Mucosa of descending colon (tissue), 3 donors: ENCODE measurements at regions of chr19 and their contacts with region 1.

Region 1: GRCh38 chr19:13262450-13262849 is 112.2 kb downstream of the IER2 start:
- DNase-seq: peak in 1 of 3 donors; percentile 19
- ATAC-seq: peak; percentile 77
- H3K4me3 ChIP-seq: no peak overlapping the region
- H3K4me1 ChIP-seq: no peaks in the 10 kb centered on the region
- CTCF ChIP-seq: no peak

Region 2: DNA sequence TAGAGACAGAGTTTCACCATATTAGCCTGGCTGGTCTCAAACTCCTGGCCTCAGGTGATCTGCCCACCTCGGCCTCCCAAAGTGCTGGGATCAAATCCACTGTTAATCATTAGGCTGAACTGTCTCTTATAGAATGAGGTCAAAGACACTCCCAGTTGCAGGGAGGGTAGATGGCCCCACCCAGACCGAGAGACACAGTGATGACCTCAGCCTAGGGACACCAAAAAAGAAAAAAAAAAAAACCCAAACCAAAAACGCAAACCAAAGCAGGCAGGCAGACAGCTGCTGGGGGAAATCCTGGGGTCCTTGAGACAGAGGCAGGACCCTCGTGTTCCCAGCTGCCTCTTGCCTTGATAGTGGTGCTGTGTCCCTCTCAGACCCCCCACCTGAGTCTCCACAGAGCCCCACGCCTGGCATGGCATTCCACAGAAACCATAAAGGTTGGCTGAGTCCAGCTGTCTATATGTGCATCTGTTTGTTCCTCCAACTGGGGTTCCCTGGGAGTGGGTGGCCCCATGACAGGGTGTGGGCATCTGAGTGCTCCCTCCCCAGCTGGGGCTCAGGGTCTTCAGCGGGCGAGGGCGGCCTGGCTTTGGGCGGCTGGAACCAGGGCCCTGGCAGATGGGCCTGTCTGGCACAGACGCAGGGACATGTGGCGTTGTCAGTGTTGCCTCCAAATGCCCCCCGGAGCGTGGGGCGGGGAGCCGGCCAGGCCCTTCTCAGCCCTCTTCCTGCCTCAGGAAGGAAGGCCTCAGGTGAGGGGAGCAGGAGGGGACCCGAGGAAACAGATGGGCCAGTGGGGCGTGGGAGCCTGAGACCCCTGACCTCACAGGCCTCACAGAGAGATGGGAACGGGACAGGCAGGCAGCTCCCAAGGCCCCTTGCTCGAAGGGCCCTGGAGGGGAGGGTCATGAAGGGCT is 287.9 kb before region 1 on chr19:
- intact Hi-C with region 1: loop called in 1 of 2 experiments (anchors 10 kb)
- DNase-seq: no peak
- ATAC-seq: no peak
- H3K4me3 ChIP-seq: no peak overlapping the region
- H3K4me1 ChIP-seq: no peaks in the 10 kb centered on the region
- CTCF ChIP-seq: no peak

Region 3: DNA sequence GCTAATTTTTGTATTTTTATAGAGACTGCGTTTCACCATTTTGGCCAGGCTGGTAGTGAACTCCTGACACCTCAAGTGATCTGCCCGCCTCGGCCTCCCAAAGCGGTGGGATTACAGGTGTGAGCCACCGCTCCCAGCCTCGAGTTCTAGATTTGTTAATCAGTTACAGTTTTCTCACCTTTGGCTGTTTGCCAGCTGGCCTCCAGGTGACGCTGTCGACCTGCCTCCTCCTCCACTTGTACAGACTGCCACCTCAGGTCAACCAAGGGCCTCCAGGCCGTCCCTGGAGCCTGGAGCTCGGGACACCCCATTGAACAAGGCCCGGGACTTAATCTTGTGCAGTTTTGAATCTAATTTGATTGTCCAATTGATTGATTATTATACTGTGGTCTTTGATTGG is 66.8 kb before region 1 on chr19:
- intact Hi-C with region 1: loop called in 1 of 2 experiments (anchors 10 kb)
- DNase-seq: peak; percentile 79 to 88 (median 82)
- ATAC-seq: peak; percentile 78
- H3K4me3 ChIP-seq: no peak overlapping the region
- H3K4me1 ChIP-seq: peaks cover 16% of the 10 kb centered on the region
- CTCF ChIP-seq: no peak